CD14-positive monocyte (primary cell): ENCODE measurements at regions of chr14 and their contacts with region 1.

Region 1: DNA sequence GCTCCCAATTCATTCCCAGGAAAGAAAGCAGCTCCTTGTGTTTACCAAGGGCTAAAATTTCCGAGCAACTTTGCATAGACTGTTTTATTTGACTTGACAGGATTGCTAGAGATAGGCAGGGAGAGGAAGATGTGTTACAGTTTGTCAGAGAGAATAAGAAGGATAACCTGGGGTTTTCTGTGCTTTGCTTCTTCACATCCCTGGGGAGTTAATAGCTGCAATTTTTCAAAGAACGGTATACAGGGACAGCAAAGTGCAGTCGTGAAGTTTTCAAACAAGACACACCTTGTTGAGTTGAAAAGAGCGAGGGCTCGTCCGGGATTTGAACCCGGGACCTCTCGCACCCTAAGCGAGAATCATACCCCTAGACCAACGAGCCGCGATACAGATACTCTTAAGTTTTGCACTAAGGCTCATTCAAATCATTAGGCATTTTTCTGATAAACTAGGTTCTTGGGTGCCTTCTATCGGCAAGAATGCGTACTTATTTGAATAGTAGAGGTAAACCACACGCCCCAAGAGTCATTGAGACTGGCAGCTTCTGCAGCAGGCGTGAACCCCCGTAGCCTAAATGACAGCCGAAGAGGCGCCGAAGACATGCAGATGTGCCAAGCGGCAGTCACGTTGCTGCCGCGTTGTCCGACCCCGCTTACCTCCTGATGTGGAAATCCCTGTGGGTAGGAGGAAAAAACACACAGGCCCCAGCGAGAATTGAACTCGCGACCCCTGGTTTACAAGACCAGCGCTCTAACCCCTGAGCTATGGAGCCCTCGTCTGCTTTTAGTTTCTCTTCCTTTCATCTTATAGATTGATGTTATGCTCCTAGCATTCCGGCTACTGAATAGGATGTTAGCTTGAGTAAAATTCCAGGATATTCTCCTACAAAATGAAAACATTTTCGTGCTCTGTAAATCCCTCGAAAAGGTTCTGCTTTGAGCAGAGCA is 22.2 kb upstream of the RNASE12 start:
- DNase-seq: peak; percentile 65 to 83 (median 81)
- H3K4me3 ChIP-seq: peak overlapping the region; percentile 45 to 69 (median 58)
- H3K4me3 Mint-ChIP-seq: no peak overlapping the region
- H3K27ac ChIP-seq: no peak overlapping the region
- H3K27ac Mint-ChIP-seq: no peak overlapping the region
- H3K4me1 ChIP-seq: peaks cover 49 to 55% of the 10 kb centered on the region in 2 donors
- H3K4me1 Mint-ChIP-seq: peaks cover 12% of the 10 kb centered on the region
- H3K27me3 ChIP-seq: no peaks in the 10 kb centered on the region
- H3K27me3 Mint-ChIP-seq: no peaks in the 10 kb centered on the region
- CTCF ChIP-seq: peak; percentile 57

Region 2: GRCh38 chr14:20327005-20327869 is 286.1 kb before region 1 on chr14:
- intact Hi-C with region 1: loop called (anchors 2 kb)
- DNase-seq: peak; percentile 50 to 79 (median 61)
- H3K4me3 ChIP-seq: no peak overlapping the region
- H3K4me3 Mint-ChIP-seq: no peak overlapping the region
- H3K27ac ChIP-seq: no peak overlapping the region
- H3K27ac Mint-ChIP-seq: peak overlapping the region in 1 of 7 donors; percentile 13
- H3K4me1 ChIP-seq: peaks cover 0 to under 1% of the 10 kb centered on the region in 2 donors
- H3K4me1 Mint-ChIP-seq: peaks cover 15% of the 10 kb centered on the region
- H3K27me3 ChIP-seq: no peaks in the 10 kb centered on the region
- H3K27me3 Mint-ChIP-seq: no peaks in the 10 kb centered on the region
- CTCF ChIP-seq: peak; percentile 81

Region 3: GRCh38 chr14:20343092-20343861 is 270.1 kb before region 1 on chr14 and contains the start of gene PARP2:
- intact Hi-C with region 1: loop called in 1 of 2 experiments (anchors 5 kb)
- DNase-seq: peak; percentile 97 to 99 (median 98)
- H3K4me3 ChIP-seq: peak within 1 kb of the TSS; percentile 71 to 89 (median 80)
- H3K4me3 Mint-ChIP-seq: peak within 1 kb of the TSS; percentile 95 to 96
- H3K27ac ChIP-seq: peak within 1 kb of the TSS; percentile 83 to 93
- H3K27ac Mint-ChIP-seq: peak within 1 kb of the TSS; percentile 93 to 98 (median 96)
- H3K4me1 ChIP-seq: peaks cover 11 to 14% of the 10 kb centered on the region in 2 donors
- H3K4me1 Mint-ChIP-seq: peaks cover 9% of the 10 kb centered on the region
- H3K27me3 ChIP-seq: no peaks in the 10 kb centered on the region
- H3K27me3 Mint-ChIP-seq: peaks cover 0 to 6% (median 3%) of the 10 kb centered on the region in 3 donors
- CTCF ChIP-seq: no peak
- polyA plus RNA-seq, gene PARP2: 1.8 to 7.3 (median 3.9) TPM

Region 4: GRCh38 chr14:20413045-20413799 is 200.1 kb before region 1 on chr14 and contains the start of gene TEP1:
- intact Hi-C with region 1: loop called in 1 of 2 experiments (anchors 5 kb)
- DNase-seq: peak; percentile 45 to 61 (median 52)
- H3K4me3 ChIP-seq: peak within 1 kb of the TSS; percentile 82 to 95 (median 86)
- H3K4me3 Mint-ChIP-seq: peak within 1 kb of the TSS; percentile 97 to 98
- H3K27ac ChIP-seq: peak within 1 kb of the TSS; percentile 73 to 82
- H3K27ac Mint-ChIP-seq: peak within 1 kb of the TSS; percentile 83 to 97 (median 92)
- H3K4me1 ChIP-seq: peaks cover 29 to 35% of the 10 kb centered on the region in 2 donors
- H3K4me1 Mint-ChIP-seq: peaks cover 50% of the 10 kb centered on the region
- H3K27me3 ChIP-seq: no peaks in the 10 kb centered on the region
- H3K27me3 Mint-ChIP-seq: peaks cover 0 to 1% (median 0%) of the 10 kb centered on the region in 3 donors
- CTCF ChIP-seq: no peak
- polyA plus RNA-seq, gene TEP1: 2.3 to 78.9 (median 7.1) TPM

Region 5: GRCh38 chr14:20757965-20758364 is 144.6 kb after region 1 on chr14:
- intact Hi-C with region 1: no loop called
- DNase-seq: peak in 2 of 3 donors; percentile 30 to 36
- H3K4me3 ChIP-seq: no peak overlapping the region
- H3K4me3 Mint-ChIP-seq: no peak overlapping the region
- H3K27ac ChIP-seq: no peak overlapping the region
- H3K27ac Mint-ChIP-seq: no peak overlapping the region
- H3K4me1 ChIP-seq: peaks cover 0 to 4% of the 10 kb centered on the region in 2 donors
- H3K4me1 Mint-ChIP-seq: peaks cover 10% of the 10 kb centered on the region
- H3K27me3 ChIP-seq: no peaks in the 10 kb centered on the region
- H3K27me3 Mint-ChIP-seq: peaks cover 0 to 2% (median 2%) of the 10 kb centered on the region in 3 donors
- CTCF ChIP-seq: peak; percentile 57

Region 6: GRCh38 chr14:20782280-20782890 is 169.0 kb after region 1 on chr14:
- intact Hi-C with region 1: loop called in 1 of 2 experiments (anchors 10 kb)
- DNase-seq: peak in 2 of 3 donors; percentile 50 to 66
- H3K4me3 ChIP-seq: peak overlapping the region; percentile 75 to 100 (median 93)
- H3K4me3 Mint-ChIP-seq: peak overlapping the region; percentile 95 to 99
- H3K27ac ChIP-seq: peak overlapping the region; percentile 85 to 98
- H3K27ac Mint-ChIP-seq: peak overlapping the region; percentile 93 to 100 (median 99)
- H3K4me1 ChIP-seq: peaks cover 59 to 74% of the 10 kb centered on the region in 2 donors
- H3K4me1 Mint-ChIP-seq: peaks cover 69% of the 10 kb centered on the region
- H3K27me3 ChIP-seq: no peaks in the 10 kb centered on the region
- H3K27me3 Mint-ChIP-seq: no peaks in the 10 kb centered on the region
- CTCF ChIP-seq: no peak